PC-3 (cell line): ENCODE measurements at regions of chr14 and their contacts with region 1.

Region 1: DNA sequence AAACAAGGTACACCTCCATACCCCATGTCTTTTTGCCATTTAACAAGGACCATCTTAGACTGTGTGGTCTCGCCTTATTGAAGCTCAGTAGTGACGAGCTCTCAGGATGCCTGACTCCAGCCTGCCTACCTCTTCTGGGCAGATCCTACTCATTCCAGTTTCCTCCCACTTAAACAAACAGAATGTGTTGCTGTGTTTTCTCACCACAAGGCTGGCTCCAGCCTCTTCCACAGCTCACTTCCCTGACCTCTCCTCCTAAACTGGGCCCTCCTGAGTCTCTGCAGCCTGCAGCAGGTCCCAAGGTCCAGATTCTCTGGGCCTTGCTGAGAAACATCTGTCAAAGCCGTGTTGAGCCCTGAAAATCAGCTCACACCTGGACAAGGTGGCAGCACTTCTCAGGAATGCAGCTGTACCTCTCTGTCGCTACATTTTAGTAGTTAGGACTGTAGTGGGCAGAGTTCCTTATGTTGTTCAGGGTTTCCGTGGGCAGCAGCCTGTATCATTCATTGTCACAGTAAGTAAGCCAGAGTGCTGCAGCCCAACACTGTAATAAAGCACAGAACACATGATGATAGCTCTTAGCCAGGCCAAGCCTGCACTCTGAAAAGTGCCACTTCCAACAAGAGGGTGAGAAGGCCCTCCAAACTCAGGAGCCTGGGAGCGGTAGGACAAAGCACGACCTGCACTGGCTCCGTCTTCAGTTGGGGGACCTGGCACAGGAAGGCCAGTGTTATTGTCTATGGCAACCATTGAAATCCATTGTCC is 68.5 kb downstream of the NKX2-1 start:
- DNase-seq: peak; percentile 22
- ATAC-seq: peak; percentile 58
- H3K4me3 ChIP-seq: no peak overlapping the region
- H3K27ac ChIP-seq: no peak overlapping the region
- H3K4me1 ChIP-seq: no peaks in the 10 kb centered on the region
- H3K27me3 ChIP-seq: peaks cover 37% of the 10 kb centered on the region
- CTCF ChIP-seq: no peak

Region 2: GRCh38 chr14:36014236-36014635 is 437.2 kb before region 1 on chr14:
- CTCF ChIA-PET with region 1: no interaction called
- POLR2A ChIA-PET with region 1: interaction called, 13 read pairs
- intact Hi-C with region 1: no loop called
- DNase-seq: no peak
- ATAC-seq: no peak
- H3K4me3 ChIP-seq: no peak overlapping the region
- H3K27ac ChIP-seq: no peak overlapping the region
- H3K4me1 ChIP-seq: no peaks in the 10 kb centered on the region
- H3K27me3 ChIP-seq: peaks cover 34% of the 10 kb centered on the region
- CTCF ChIP-seq: no peak